GM13976 (cell line): ENCODE measurements at regions of chr3 and their contacts with region 1.

Region 1: GRCh38 chr3:58640700-58641372 is 25.7 kb downstream of the FAM3D start:
- DNase-seq: peak; percentile 87
- CTCF ChIP-seq: peak; percentile 89

Region 2: GRCh38 chr3:58323529-58324390 is 317.1 kb before region 1 on chr3:
- in situ Hi-C with region 1: no loop called
- DNase-seq: no peak
- CTCF ChIP-seq: no peak

Region 3: DNA sequence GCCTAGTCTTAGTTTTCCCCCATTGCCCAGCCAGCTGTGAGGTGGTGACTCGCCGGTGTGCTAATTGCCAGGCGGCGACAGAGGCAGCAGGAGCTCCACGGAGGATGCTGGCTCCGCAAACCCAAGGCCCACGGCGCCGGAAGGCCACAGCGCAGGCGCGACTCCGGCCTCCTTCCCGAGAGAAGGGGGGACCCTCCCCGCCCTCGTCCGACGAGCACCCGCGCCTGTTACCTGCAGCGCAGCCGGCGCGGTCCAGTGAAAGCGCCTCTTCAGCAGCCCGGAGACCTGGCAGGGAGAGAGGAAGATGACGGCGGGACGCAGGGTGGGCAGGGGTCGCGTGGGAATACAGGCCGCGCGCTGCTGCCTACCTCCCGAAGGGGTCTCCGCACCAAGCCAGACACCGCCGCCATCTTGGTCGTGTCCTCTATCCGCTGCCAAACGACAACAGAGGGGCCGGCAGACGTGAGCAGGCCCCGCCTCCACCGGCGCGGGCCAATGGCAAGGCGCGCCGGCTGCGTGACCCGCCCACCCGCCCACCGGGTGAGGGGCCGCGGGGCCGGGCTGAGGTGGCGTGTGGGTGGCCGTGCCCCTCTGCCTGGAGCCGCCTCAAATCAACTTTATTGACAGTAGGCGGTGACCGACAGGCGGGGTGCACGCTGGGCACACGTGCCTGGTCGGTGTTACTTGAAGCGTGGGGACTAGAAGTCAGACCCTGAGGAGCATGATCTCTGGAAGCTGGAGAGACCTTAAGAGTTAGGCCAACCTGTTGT is 207.3 kb before region 1 on chr3 and contains the start of gene PDHB:
- in situ Hi-C with region 1: no loop called
- DNase-seq: peak; percentile 98
- CTCF ChIP-seq: no peak

Region 4: DNA sequence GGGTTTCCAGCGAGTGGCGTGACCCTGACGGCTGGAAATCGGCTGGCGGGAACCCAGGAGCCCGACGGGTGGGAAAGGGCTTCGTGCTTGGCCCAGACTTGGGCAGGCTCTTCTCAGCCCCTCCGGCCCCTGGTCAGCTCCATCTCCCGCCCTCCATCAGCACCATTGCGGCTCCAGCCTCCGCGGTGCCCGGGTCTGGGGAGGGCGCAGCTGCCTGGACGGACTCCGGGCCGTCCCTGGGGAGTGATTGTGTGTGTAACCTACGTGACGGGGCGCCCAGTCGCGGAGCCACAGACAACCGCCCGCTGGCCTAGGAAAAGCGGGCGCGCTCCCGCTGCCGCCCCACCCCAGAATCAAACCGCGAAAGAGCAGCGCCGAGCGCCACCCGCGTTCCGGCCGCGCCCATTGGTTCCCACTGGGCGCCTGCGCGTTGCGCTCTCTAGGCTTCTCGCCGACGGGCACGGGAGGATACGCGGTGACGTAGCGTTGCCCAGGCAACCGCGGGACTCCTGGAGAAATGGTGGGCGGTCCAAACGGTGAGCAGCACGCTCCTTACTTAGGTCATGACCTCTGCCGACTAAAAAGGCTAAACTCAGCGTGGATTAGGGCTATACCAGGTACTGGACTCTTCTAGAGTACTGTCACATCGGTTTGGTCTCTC is 409.0 kb after region 1 on chr3 and contains the start of gene CFAP20DC:
- in situ Hi-C with region 1: loop called (anchors 10 kb)
- DNase-seq: peak; percentile 95
- CTCF ChIP-seq: no peak